Ovary (tissue), 10 donors: ENCODE measurements at regions of chr13 and their contacts with region 1.

Region 1: GRCh38 chr13:20789665-20790064 is 15.9 kb upstream of the EEF1AKMT1 start:
- DNase-seq: no peak
- H3K4me3 ChIP-seq: no peak overlapping the region
- H3K27ac ChIP-seq: no peak overlapping the region
- H3K4me1 ChIP-seq: no peaks in the 10 kb centered on the region
- H3K27me3 ChIP-seq: no peaks in the 10 kb centered on the region
- CTCF ChIP-seq: no peak
- EP300 ChIP-seq: no peak
- POLR2A ChIP-seq: no peak

Region 2: DNA sequence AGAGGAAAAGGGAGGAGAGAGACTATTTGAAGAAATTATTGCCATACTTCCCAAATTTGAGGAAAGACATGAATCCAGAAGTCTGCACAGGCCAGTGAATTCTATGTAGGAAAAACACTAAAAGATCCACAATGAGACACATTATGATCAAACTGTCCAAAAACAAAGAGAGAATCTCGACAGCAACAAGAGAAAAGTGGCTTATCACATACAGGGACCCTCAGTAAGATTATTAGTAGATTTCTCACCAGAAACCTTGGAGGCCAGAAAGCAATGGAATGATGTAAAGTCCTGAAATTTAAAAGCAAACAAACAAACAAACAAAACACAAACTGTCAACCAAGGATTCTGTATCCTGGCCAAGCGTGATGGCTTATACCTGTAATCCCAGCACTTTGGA is 141.9 kb before region 1 on chr13:
- intact Hi-C with region 1: loop called in 1 of 4 experiments (anchors 5 kb)
- DNase-seq: no peak
- H3K4me3 ChIP-seq: no peak overlapping the region
- H3K27ac ChIP-seq: no peak overlapping the region
- H3K4me1 ChIP-seq: no peaks in the 10 kb centered on the region
- H3K27me3 ChIP-seq: no peaks in the 10 kb centered on the region
- CTCF ChIP-seq: no peak
- EP300 ChIP-seq: no peak
- POLR2A ChIP-seq: no peak